Activated CD4-positive, alpha-beta memory T cell treated with anti-CD3 and anti-CD28 coated beads, Interleukin-2, amount 10 ng/mL, durations not matched to agents 7 days and 5 days (primary cell): ENCODE measurements at regions of chr15 and their contacts with region 1.

Region 1: GRCh38 chr15:66685638-66686150 is 16.3 kb upstream of the SMAD6 start:
- DNase-seq: no peak
- H3K4me3 Mint-ChIP-seq: no peak overlapping the region
- H3K27ac Mint-ChIP-seq: no peak overlapping the region
- H3K4me1 Mint-ChIP-seq: peaks cover 3% of the 10 kb centered on the region
- H3K27me3 Mint-ChIP-seq: no peaks in the 10 kb centered on the region

Region 2: GRCh38 chr15:66638377-66638776 is 47.3 kb before region 1 on chr15:
- CTCF ChIA-PET with region 1: no interaction called
- POLR2A ChIA-PET with region 1: no interaction called
- DNase-seq: peak; percentile 62
- H3K4me3 Mint-ChIP-seq: no peak overlapping the region
- H3K27ac Mint-ChIP-seq: peak overlapping the region; percentile 58
- H3K4me1 Mint-ChIP-seq: peaks cover 23% of the 10 kb centered on the region
- H3K27me3 Mint-ChIP-seq: no peaks in the 10 kb centered on the region

Region 3: GRCh38 chr15:66700802-66701421 is 15.2 kb after region 1 on chr15:
- CTCF ChIA-PET with region 1: interaction called, 4 read pairs
- POLR2A ChIA-PET with region 1: interaction called, 10 read pairs
- DNase-seq: peak; percentile 90
- H3K4me3 Mint-ChIP-seq: peak overlapping the region; percentile 73
- H3K27ac Mint-ChIP-seq: peak overlapping the region; percentile 9
- H3K4me1 Mint-ChIP-seq: peaks cover 21% of the 10 kb centered on the region
- H3K27me3 Mint-ChIP-seq: peaks cover 28% of the 10 kb centered on the region

Region 4: GRCh38 chr15:66894986-66895780 is 209.5 kb after region 1 on chr15:
- CTCF ChIA-PET with region 1: no interaction called
- POLR2A ChIA-PET with region 1: no interaction called
- DNase-seq: no peak
- H3K4me3 Mint-ChIP-seq: no peak overlapping the region
- H3K27ac Mint-ChIP-seq: no peak overlapping the region
- H3K4me1 Mint-ChIP-seq: peaks cover 11% of the 10 kb centered on the region
- H3K27me3 Mint-ChIP-seq: peaks cover 12% of the 10 kb centered on the region